ENCODE measurements at regions of chr6 and their contacts with region 1.

Region 1: DNA sequence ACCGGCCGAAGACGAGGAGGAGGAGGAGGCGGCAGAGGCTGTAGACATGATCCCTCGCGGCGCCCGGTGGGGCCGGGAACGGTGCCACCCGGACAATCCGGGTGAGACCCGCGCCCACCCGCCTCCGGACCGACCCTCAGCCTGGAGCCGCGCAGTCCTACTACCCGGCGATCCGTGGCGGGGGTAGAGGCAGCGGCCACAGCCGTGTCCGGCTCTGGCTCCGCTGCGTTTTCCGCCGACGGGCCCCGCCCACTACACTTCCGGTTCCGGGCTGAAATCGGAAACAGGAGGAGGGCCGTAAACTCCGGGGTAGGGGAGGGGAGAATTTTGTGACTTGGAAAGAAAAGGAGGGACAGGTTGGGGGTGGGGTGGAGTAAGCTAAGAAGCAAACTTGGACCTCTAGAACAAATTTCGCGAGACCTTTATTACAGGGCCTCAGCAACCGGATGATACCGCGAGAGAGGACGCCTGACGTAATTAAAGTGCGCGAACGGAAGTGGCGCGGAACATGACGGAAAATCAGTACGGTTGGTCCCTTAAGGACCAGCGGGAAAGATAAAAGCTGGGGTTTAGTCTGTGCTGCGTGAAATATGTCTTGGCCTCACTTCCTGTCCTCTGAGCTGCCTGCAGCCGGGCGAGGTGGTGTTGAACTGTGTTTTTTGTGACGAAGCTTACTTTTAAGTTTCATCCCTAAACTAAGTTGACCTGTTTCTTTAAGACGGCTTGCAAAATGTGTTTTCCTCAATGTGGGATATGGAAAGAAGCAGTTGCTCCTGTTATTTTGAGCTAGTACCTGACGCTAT is at the start of gene MAP3K7:
- DNase-seq: peak; percentile 97
- H3K4me3 Mint-ChIP-seq: peak within 1 kb of the TSS; percentile 98
- H3K27ac Mint-ChIP-seq: peak within 1 kb of the TSS; percentile 99
- H3K4me1 Mint-ChIP-seq: peaks cover 38% of the 10 kb centered on the region
- H3K27me3 Mint-ChIP-seq: peaks cover 6% of the 10 kb centered on the region
- total RNA-seq, gene MAP3K7: 26.3 to 28.7 TPM

Region 2: DNA sequence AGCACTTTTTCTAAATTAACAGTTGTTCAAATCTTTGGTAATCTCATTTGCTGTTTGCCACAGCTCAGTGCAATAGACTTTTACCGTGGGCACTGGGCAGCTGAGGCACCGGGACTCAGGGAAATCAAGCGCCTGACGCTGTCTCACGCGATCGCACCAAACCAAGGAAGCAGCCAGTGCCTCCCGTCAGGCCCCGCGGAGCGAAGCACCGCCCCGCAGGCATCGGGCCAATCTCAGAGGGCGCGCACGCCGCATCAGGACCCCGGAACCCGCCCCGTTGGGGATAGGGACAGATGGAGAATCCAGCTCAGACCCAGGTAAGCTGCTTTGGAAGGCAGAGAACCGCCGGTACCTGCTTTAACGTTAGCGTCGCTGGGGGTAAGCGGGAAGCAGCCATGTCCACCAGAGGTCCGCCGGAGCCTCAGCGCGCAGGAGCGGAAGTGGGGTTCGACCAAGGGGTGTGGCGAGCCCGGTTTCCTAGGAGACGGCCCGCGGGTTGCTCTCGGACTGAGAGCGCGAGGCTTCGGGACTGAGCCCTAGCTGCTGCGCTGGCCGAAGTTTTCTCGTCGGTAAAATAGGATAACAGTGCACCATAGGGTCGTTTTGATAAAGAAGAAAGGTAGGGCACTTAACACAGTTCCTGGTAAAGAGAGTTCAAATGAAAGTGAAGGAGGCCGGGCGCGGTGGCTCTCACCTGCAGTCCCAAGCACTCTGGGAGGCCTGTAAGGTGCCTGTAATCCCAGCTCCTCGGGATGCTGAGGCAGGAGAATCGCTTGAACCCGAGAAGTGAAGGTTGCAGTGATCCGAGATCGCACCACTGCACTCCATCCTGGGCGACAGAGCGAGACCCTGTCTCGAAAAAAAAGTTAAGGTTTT is 948.5 kb before region 1 on chr6 and contains the start of gene LYRM2:
- CTCF ChIA-PET with region 1: no interaction called
- POLR2A ChIA-PET with region 1: no interaction called
- intact Hi-C with region 1: loop called (anchors 1 kb)
- DNase-seq: peak; percentile 95
- H3K4me3 Mint-ChIP-seq: peak within 1 kb of the TSS; percentile 81
- H3K27ac Mint-ChIP-seq: peak within 1 kb of the TSS; percentile 96
- H3K4me1 Mint-ChIP-seq: peaks cover 32% of the 10 kb centered on the region
- H3K27me3 Mint-ChIP-seq: no peaks in the 10 kb centered on the region
- total RNA-seq, gene LYRM2: 25.5 to 26.4 TPM

Region 3: GRCh38 chr6:89834884-89835792 is 751.9 kb before region 1 on chr6:
- CTCF ChIA-PET with region 1: no interaction called
- POLR2A ChIA-PET with region 1: no interaction called
- intact Hi-C with region 1: loop called (anchors 5 kb)
- DNase-seq: peak; percentile 71
- H3K4me3 Mint-ChIP-seq: peak overlapping the region; percentile 9
- H3K27ac Mint-ChIP-seq: peak overlapping the region; percentile 76
- H3K4me1 Mint-ChIP-seq: peaks cover 61% of the 10 kb centered on the region
- H3K27me3 Mint-ChIP-seq: no peaks in the 10 kb centered on the region

Region 4: DNA sequence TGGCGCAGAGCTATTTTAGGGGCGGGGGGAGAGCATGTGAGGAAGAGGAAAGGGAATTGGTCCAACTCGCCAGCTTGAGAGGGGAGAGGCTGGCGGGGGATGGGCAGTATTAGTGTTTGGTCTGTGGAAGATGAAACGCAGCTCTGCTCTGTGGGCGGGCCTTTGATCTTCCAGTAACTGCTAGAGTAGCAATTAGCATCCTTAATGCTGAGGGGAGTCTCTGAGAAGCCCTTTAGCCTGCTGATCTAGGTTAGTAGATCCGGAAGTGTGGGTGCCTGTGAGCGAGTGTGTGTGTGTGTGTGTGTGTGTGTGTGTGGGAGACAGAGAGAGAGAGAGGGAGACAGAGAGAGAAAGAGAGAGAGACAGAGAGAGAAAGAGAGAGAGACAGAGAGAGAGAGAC is 173.2 kb before region 1 on chr6:
- CTCF ChIA-PET with region 1: no interaction called
- POLR2A ChIA-PET with region 1: no interaction called
- intact Hi-C with region 1: loop called (anchors 2 kb)
- DNase-seq: peak; percentile 92
- H3K4me3 Mint-ChIP-seq: peak overlapping the region; percentile 64
- H3K27ac Mint-ChIP-seq: peak overlapping the region; percentile 93
- H3K4me1 Mint-ChIP-seq: peaks cover 71% of the 10 kb centered on the region
- H3K27me3 Mint-ChIP-seq: no peaks in the 10 kb centered on the region